MCF 10A (cell line): ENCODE measurements at regions of chr2 and their contacts with region 1.

Region 1: DNA sequence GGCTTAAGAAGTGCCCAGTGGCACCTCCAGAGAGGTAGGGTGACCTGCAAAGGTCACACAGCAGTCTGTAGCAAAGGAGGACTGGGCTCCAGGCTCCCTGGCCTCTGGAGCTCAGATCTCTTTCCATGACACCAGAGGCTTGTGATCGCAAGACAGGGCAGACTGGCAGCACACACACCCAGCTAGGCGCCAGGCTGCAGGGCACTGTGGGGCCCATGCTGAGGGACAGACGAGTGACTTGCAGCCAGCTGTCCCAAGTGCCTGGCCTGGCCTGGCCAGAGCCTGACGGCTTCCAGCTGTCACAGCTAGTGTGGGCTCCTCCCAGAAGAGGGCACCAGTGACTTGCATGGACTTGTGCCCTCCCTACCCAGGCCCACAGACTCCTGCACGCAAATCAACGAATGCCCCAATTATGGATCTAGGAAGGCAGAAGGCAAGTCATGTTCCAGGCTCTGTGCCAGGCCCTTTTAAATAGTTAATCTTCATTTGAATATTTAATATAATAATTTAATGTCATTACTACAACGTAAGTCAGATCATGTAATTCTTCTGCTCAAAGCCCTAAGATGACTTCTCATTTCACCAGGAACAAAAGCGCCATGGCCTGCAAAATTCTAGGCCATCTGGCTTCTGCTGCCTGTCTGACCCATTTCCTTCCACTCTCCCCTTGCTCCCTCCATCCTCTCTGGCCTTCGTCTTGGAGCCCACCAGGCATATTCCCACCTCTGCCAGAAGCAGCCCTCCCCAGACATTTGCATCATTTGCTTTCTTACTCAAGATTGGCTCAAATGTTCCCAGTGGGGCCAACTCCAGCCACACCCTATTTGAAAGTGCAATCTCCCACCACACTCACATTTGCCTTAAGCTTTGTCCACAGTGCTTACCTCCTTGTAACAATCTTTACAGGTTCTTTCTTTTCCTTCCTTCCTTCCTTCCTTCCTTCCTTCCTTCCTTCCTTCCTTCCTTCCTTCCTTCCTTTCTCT is 3.7 kb upstream of the SPEG start:
- DNase-seq: peak; percentile 60
- H3K4me3 Mint-ChIP-seq: no peak overlapping the region
- H3K27ac Mint-ChIP-seq: no peak overlapping the region
- H3K4me1 Mint-ChIP-seq: no peaks in the 10 kb centered on the region
- H3K27me3 Mint-ChIP-seq: peaks cover 5% of the 10 kb centered on the region
- CTCF ChIP-seq: peak; percentile 27

Region 2: GRCh38 chr2:218995972-218996711 is 434.8 kb before region 1 on chr2:
- CTCF ChIA-PET with region 1: no interaction called
- POLR2A ChIA-PET with region 1: no interaction called
- intact Hi-C with region 1: no loop called
- DNase-seq: peak; percentile 82
- H3K4me3 Mint-ChIP-seq: peak overlapping the region; percentile 73
- H3K27ac Mint-ChIP-seq: no peak overlapping the region
- H3K4me1 Mint-ChIP-seq: peaks cover 15% of the 10 kb centered on the region
- H3K27me3 Mint-ChIP-seq: peaks cover 22% of the 10 kb centered on the region
- CTCF ChIP-seq: peak; percentile 84

Region 3: DNA sequence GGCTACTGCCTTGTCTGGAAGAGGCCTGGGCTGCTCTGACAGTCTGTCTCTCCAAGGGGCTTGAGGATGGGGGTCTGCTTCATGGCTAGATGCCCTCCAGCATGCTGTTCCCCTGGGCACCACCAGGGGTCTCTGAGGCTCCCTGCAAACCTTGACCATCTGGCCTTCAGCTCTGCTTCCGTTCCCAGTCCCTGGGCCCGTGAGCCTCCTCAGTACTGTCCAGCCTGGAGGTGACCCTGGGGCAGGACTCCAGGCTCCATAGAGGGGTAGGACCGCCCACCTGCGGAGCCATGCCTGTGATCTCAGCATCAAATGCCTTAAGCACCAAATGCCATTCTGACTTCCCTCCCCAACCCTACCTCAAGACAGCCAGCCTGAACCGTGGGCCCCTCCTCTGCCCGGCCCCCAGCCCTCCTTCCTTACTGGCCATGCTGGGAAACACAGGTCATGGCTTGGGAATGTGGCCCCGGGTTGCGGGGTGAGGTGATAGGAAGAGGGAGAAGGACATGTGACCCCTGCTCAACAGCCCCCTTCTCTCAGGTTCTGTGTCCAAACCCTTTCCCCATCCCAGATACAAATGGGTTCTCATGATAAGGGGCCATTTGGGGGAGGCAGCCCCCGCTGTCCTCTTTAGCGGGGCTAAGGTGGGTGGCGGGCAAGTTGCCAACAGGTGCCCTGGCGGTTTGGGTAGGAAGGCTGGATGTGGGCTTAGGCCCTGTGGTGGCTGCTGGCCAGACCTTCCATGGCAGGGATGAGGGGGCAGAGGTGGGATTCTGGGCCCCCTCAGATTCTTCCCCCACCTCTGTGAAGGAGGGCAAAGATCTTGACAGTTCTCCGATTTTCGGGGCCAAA is 28.8 kb after region 1 on chr2:
- CTCF ChIA-PET with region 1: interaction called, 6 read pairs
- POLR2A ChIA-PET with region 1: no interaction called
- intact Hi-C with region 1: loop called (anchors 2 kb)
- DNase-seq: peak; percentile 55
- H3K4me3 Mint-ChIP-seq: no peak overlapping the region
- H3K27ac Mint-ChIP-seq: no peak overlapping the region
- H3K4me1 Mint-ChIP-seq: peaks cover 6% of the 10 kb centered on the region
- H3K27me3 Mint-ChIP-seq: no peaks in the 10 kb centered on the region
- CTCF ChIP-seq: peak; percentile 76